ENCODE measurements at regions of chr19 and their contacts with region 1.

Region 1: GRCh38 chr19:50368649-50369570 is 3.5 kb upstream of the NAPSA start:
- DNase-seq: peak; percentile 87 to 95
- H3K4me3 ChIP-seq: peak overlapping the region; percentile 62 to 81 (median 66)
- H3K27ac ChIP-seq: peak overlapping the region; percentile 70 to 87 (median 79)
- H3K4me1 ChIP-seq: peaks cover 0 to 13% (median 12%) of the 10 kb centered on the region in 4 donors
- H3K27me3 ChIP-seq: no peaks in the 10 kb centered on the region
- CTCF ChIP-seq: peak in 6 of 7 experiments; percentile 13 to 93 (median 88)
- EP300 ChIP-seq: no peak
- POLR2A ChIP-seq: no peak

Region 2: GRCh38 chr19:50329146-50329925 is 39.6 kb before region 1 on chr19 and contains the start of gene KCNC3:
- intact Hi-C with region 1: no loop called
- DNase-seq: peak; percentile 99
- H3K4me3 ChIP-seq: peak within 1 kb of the TSS; percentile 27 to 45 (median 38)
- H3K27ac ChIP-seq: peak within 1 kb of the TSS; percentile 44 to 78 (median 58)
- H3K4me1 ChIP-seq: peaks cover 26 to 73% (median 65%) of the 10 kb centered on the region in 4 donors
- H3K27me3 ChIP-seq: peaks cover 10 to 98% (median 80%) of the 10 kb centered on the region in 3 donors
- CTCF ChIP-seq: no peak
- EP300 ChIP-seq: no peak
- POLR2A ChIP-seq: no peak
- total RNA-seq, gene KCNC3: 0.37 to 2.3 (median 0.95) TPM in 4 of 5 donors, not detected in the other

Region 3: DNA sequence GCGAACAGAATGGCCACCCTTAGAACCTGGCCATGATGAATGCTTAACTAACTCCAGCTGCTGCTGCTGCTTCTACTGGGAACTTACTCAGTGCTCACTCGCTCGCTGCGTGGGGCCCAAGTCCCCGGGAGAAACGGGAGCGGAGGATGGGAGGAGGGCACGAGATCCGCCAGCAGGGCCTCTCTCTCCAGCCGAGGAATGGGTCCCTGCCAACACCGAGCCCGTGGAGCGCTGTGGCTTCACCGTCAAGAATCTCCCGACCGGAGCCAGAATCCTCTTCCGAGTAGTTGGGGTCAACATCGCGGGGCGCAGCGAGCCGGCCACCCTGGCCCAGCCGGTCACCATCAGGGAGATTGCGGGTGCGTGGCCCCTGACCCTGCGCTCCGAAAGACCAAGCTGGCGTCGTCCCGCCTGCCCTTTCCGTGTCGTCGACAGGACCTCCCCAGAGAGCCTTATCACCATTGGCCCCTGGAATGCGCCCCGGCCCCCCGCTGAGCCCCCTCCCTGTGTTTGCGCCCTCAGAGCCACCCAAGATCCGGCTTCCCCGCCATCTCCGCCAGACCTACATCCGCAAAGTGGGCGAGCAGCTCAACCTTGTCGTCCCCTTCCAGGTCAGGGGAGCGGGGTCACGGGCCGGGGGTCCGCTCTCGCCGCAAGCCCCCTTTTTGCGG is 89.6 kb after region 1 on chr19:
- intact Hi-C with region 1: loop called (anchors 5 kb)
- DNase-seq: peak in 1 of 2 donors; percentile 32
- H3K4me3 ChIP-seq: no peak overlapping the region
- H3K27ac ChIP-seq: no peak overlapping the region
- H3K4me1 ChIP-seq: no peaks in the 10 kb centered on the region
- H3K27me3 ChIP-seq: peaks cover 0 to 60% (median 31%) of the 10 kb centered on the region in 3 donors
- CTCF ChIP-seq: no peak
- EP300 ChIP-seq: no peak
- POLR2A ChIP-seq: no peak

Measured in stomach (tissue), 19 donors.